ENCODE measurements at regions of chr12 and their contacts with region 1.

Region 1: DNA sequence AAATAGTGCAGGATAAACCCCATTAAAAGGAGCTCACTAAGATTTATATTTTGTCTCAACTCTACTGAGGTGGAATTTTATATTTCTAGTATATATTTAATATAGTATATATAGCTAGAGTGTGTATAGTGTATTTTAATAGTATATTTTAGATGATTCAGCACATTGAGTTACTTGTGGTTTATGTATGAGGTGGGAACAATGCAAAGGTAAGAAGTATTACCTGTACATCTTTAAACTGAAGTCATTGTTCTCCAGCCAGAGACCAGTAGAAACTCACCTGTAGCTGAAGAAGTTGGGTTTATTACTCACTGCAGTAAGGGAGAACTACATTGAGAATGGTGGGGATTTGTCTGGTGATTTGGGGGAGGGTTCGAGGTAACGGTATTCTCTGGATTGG is 15.9 kb downstream of the ETNK1 start:
- DNase-seq: no peak
- H3K4me3 ChIP-seq: no peak overlapping the region
- H3K27me3 ChIP-seq: no peaks in the 10 kb centered on the region
- CTCF ChIP-seq: no peak

Region 2: DNA sequence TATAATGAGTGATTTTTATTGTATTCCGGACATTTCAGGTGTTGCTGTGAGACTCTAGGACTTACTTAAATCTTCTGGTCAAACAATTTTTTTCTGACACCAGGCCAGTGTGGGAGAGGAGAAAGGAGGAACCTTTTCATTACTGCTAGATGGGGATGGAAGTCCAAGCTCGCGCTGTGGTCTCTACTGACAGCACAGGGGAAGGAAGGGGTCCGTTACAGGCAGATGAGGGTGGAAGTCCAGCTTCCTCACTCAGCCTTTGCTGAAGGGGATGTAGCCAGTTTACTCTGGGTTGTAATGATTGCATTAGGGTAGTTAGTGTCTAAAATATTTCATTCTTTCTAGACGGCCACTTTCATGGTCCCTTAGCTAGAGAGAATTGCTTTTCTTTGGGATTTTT is 280.1 kb before region 1 on chr12:
- CTCF ChIA-PET with region 1: no interaction called
- POLR2A ChIA-PET with region 1: no interaction called
- DNase-seq: no peak
- H3K4me3 ChIP-seq: no peak overlapping the region
- H3K27me3 ChIP-seq: no peaks in the 10 kb centered on the region
- CTCF ChIP-seq: no peak

Region 3: GRCh38 chr12:22459838-22460490 is 180.9 kb before region 1 on chr12:
- CTCF ChIA-PET with region 1: no interaction called
- POLR2A ChIA-PET with region 1: no interaction called
- DNase-seq: no peak
- H3K4me3 ChIP-seq: no peak overlapping the region
- H3K27me3 ChIP-seq: no peaks in the 10 kb centered on the region
- CTCF ChIP-seq: peak; percentile 70

Region 4: DNA sequence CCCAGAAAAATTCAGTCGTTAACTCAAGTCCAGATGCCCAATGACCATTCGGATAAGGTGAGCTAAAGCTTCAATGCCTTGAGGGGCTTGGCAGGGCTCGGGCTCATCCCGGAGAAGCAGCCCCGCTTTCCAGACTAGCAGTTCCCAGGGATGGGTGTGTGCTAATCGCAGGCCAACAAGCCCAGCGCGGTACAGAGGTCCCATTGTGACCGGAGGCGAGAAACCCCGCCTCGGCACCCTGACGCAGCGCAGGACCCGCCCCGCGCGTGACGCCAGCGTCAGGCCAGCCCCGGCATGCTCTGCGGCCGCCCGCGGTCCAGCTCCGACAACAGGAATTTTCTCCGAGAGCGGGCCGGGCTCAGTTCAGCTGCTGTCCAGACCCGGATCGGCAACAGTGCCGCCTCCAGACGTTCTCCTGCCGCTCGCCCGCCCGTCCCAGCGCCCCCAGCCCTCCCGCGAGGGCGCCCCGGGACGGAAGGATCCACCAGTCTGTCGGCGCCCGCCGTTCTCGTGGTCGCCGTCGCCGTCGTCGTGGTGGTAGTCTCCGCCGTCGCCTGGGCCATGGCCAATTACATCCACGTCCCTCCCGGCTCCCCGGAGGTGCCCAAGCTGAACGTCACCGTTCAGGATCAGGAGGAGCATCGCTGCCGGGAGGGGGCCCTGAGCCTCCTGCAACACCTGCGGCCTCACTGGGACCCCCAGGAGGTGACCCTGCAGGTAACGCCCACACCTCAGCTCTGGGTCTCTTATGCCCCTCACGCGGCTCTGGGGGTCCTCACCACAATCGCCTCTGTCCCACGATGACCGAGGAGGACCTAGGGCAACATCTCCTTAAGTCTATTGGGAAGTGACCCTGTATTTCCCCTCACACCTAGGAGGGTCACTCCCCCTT is 15.7 kb before region 1 on chr12 and contains the start of gene ETNK1:
- CTCF ChIA-PET with region 1: interaction called, 3 read pairs
- POLR2A ChIA-PET with region 1: interaction called, 11 read pairs
- DNase-seq: peak; percentile 65
- H3K4me3 ChIP-seq: peak within 1 kb of the TSS; percentile 65
- H3K27me3 ChIP-seq: no peaks in the 10 kb centered on the region
- CTCF ChIP-seq: no peak
- polyA plus RNA-seq, gene ETNK1: 6.7 and 13.0 TPM in 2 replicates

Measured in BJ (cell line).